CD8-positive, alpha-beta T cell (primary cell): ENCODE measurements at regions of chr5 and their contacts with region 1.

Region 1: GRCh38 chr5:140690941-140691924 is at the starts of genes HARS1 and HARS2:
- DNase-seq: peak; percentile 58 to 92 (median 83)
- ATAC-seq: peak; percentile 88
- H3K4me3 ChIP-seq: peak within 1 kb of the TSS; percentile 84 to 94
- H3K4me3 Mint-ChIP-seq: peak within 1 kb of the TSS; percentile 99
- H3K27ac ChIP-seq: peak within 1 kb of the TSS; percentile 77 to 87
- H3K27ac Mint-ChIP-seq: peak within 1 kb of the TSS; percentile 98
- H3K4me1 ChIP-seq: peaks cover 23% of the 10 kb centered on the region
- H3K4me1 Mint-ChIP-seq: peaks cover 48% of the 10 kb centered on the region
- H3K27me3 ChIP-seq: no peaks in the 10 kb centered on the region
- H3K27me3 Mint-ChIP-seq: no peaks in the 10 kb centered on the region
- CTCF ChIP-seq: no peak
- total RNA-seq, gene HARS1: 67.3 to 70.2 TPM
- total RNA-seq, gene HARS2: 41.3 to 43.2 TPM

Region 2: DNA sequence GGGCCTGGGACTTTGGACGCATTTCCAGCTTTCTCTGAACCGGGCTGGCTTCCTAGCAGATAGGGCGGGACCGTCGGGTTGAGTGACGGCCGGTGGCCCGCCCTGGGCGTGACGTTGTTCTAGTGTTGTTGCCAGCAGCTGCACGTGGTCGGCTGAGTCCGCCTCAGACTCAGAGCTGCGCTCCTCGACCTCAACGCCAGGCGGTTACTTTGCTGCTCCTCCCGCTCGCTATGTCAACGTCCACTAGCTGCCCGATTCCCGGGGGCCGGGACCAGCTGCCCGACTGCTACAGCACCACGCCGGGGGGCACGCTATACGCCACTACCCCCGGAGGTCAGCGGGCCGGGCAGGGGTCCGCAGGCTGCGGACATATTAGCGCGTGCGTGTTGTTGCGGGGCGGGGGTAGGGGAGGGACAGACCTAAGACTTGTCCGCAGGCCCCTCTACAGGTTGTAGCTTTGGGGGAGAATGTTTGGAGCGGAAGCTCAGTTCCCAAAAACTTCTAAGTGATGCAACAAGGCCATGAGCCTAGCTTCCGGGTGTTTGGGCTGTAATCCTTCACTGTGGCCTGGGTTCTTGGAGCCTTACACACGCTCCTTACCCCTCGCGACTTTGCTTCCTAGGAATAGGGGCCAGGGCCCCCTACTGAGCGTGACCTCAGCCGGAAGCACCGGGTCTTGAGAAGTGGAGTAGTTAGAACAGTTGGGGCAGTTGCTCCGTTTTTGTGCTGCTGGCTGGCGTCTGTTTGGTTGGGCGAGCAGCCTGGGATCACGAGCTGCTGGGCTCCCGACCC is 143.5 kb before region 1 on chr5 and contains the start of gene EIF4EBP3:
- CTCF ChIA-PET with region 1: no interaction called
- POLR2A ChIA-PET with region 1: interaction called, 11 read pairs
- intact Hi-C with region 1: loop called in 1 of 2 experiments (anchors 1 kb)
- DNase-seq: peak; percentile 74 to 94 (median 88)
- ATAC-seq: peak; percentile 97
- H3K4me3 ChIP-seq: peak within 1 kb of the TSS; percentile 69 to 96
- H3K4me3 Mint-ChIP-seq: peak within 1 kb of the TSS; percentile 90
- H3K27ac ChIP-seq: peak within 1 kb of the TSS; percentile 88 to 96
- H3K27ac Mint-ChIP-seq: peak within 1 kb of the TSS; percentile 98
- H3K4me1 ChIP-seq: peaks cover 21% of the 10 kb centered on the region
- H3K4me1 Mint-ChIP-seq: peaks cover 31% of the 10 kb centered on the region
- H3K27me3 ChIP-seq: no peaks in the 10 kb centered on the region
- H3K27me3 Mint-ChIP-seq: no peaks in the 10 kb centered on the region
- CTCF ChIP-seq: peak; percentile 72
- total RNA-seq, gene EIF4EBP3: 10.6 to 13.7 TPM

Region 3: GRCh38 chr5:140664359-140665119 is 26.7 kb before region 1 on chr5 and contains the start of gene WDR55:
- CTCF ChIA-PET with region 1: interaction called, 4 read pairs
- POLR2A ChIA-PET with region 1: interaction called, 5 read pairs
- intact Hi-C with region 1: loop called (anchors 1 kb)
- DNase-seq: peak; percentile 90 to 98 (median 97)
- ATAC-seq: peak; percentile 92
- H3K4me3 ChIP-seq: peak within 1 kb of the TSS; percentile 80 to 95
- H3K4me3 Mint-ChIP-seq: peak within 1 kb of the TSS; percentile 89
- H3K27ac ChIP-seq: peak within 1 kb of the TSS; percentile 90 to 91
- H3K27ac Mint-ChIP-seq: peak within 1 kb of the TSS; percentile 96
- H3K4me1 ChIP-seq: peaks cover 15% of the 10 kb centered on the region
- H3K4me1 Mint-ChIP-seq: peaks cover 38% of the 10 kb centered on the region
- H3K27me3 ChIP-seq: no peaks in the 10 kb centered on the region
- H3K27me3 Mint-ChIP-seq: no peaks in the 10 kb centered on the region
- CTCF ChIP-seq: no peak
- total RNA-seq, gene WDR55: 45.4 to 49.2 TPM

Region 4: GRCh38 chr5:140800816-140801493 is 109.7 kb after region 1 on chr5 and contains the start of gene PCDHA3:
- CTCF ChIA-PET with region 1: no interaction called
- POLR2A ChIA-PET with region 1: no interaction called
- intact Hi-C with region 1: no loop called
- DNase-seq: no peak
- ATAC-seq: no peak
- H3K4me3 ChIP-seq: no peak within 1 kb of the TSS
- H3K4me3 Mint-ChIP-seq: no peak within 1 kb of the TSS
- H3K27ac ChIP-seq: no peak within 1 kb of the TSS
- H3K27ac Mint-ChIP-seq: no peak within 1 kb of the TSS
- H3K4me1 ChIP-seq: no peaks in the 10 kb centered on the region
- H3K4me1 Mint-ChIP-seq: no peaks in the 10 kb centered on the region
- H3K27me3 ChIP-seq: peaks cover 0 to 2% of the 10 kb centered on the region in 2 experiments
- H3K27me3 Mint-ChIP-seq: peaks cover 35% of the 10 kb centered on the region
- CTCF ChIP-seq: no peak
- total RNA-seq, gene PCDHA3: not detected